ENCODE measurements at regions of chr12 and their contacts with region 1.

Region 1: DNA sequence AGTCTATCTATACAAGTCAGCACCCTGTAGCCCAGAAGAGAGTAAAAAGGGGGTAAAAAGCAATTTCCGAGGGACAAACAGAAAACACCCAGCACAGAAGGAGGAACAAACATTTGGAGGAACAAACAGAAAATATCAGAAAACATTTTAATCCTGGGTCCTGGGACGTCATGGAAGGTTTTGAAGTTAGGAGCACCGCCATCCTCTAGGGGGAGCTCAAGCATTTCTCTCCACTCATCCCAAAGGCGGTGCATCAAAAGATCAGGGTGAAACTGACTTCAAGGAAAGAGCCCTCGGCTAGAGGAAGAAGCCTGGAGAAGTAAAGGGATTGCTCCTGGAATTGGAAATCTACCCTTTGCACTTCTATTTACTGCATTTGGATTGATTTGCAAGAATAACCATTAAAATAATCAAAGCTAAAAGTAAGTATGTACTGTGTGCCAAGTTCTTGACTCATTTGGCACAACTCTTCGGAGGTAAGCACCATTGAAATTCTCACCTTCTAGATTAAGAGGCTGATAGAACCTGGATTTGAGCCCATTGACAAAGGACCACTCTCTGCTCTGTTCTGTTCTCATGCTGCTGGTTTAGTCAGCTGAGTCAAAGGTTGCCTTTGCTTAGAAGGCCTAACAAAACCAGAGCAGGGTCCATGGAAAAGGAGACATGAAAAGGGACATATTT is 17.2 kb upstream of the POC1B start:
- DNase-seq: peak; percentile 84
- H3K4me3 Mint-ChIP-seq: no peak overlapping the region
- H3K27ac Mint-ChIP-seq: peak overlapping the region; percentile 14
- H3K4me1 Mint-ChIP-seq: peaks cover 26% of the 10 kb centered on the region
- H3K27me3 Mint-ChIP-seq: no peaks in the 10 kb centered on the region
- CTCF ChIP-seq: peak; percentile 94

Region 2: DNA sequence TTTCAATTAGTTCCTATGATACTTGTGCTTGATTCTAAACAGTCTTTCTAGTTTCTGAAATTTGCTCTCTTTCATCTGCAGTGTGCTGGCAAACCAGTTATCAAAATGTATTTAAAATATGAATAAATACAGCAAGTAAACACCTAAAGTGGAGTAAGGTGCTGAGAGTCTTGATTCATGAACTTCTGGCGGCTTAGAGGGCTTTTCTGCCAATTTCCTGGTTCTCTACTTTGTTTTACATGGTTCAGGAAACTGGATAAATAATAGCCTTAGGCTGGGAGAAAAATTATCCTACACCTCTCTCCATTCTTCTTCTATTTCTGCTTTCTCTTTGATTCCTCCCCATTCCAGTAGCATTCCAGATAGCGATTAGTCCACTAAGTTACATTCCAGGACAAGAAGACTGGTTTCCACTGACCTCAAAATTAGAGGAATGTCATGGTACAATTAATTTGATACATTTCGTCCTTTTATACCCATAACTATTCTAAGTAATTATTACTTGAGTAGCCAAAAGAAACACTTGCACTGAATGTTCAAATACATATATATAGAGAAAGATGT is 150.7 kb after region 1 on chr12:
- CTCF ChIA-PET with region 1: no interaction called
- intact Hi-C with region 1: loop called (anchors 5 kb)
- DNase-seq: no peak
- H3K4me3 Mint-ChIP-seq: no peak overlapping the region
- H3K27ac Mint-ChIP-seq: no peak overlapping the region
- H3K4me1 Mint-ChIP-seq: peaks cover 40% of the 10 kb centered on the region
- H3K27me3 Mint-ChIP-seq: no peaks in the 10 kb centered on the region
- CTCF ChIP-seq: no peak

Region 3: GRCh38 chr12:89701606-89702206 is 158.7 kb after region 1 on chr12:
- CTCF ChIA-PET with region 1: no interaction called
- intact Hi-C with region 1: loop called (anchors 5 kb)
- DNase-seq: no peak
- H3K4me3 Mint-ChIP-seq: no peak overlapping the region
- H3K27ac Mint-ChIP-seq: no peak overlapping the region
- H3K4me1 Mint-ChIP-seq: peaks cover 74% of the 10 kb centered on the region
- H3K27me3 Mint-ChIP-seq: no peaks in the 10 kb centered on the region
- CTCF ChIP-seq: no peak

Region 4: GRCh38 chr12:89960011-89960507 is 417.0 kb after region 1 on chr12:
- CTCF ChIA-PET with region 1: no interaction called
- intact Hi-C with region 1: loop called (anchors 5 kb)
- DNase-seq: peak; percentile 67
- H3K4me3 Mint-ChIP-seq: no peak overlapping the region
- H3K27ac Mint-ChIP-seq: peak overlapping the region; percentile 49
- H3K4me1 Mint-ChIP-seq: peaks cover 43% of the 10 kb centered on the region
- H3K27me3 Mint-ChIP-seq: no peaks in the 10 kb centered on the region
- CTCF ChIP-seq: no peak

Region 5: GRCh38 chr12:90013409-90013808 is 470.4 kb after region 1 on chr12:
- CTCF ChIA-PET with region 1: no interaction called
- intact Hi-C with region 1: loop called (anchors 5 kb)
- DNase-seq: no peak
- H3K4me3 Mint-ChIP-seq: no peak overlapping the region
- H3K27ac Mint-ChIP-seq: no peak overlapping the region
- H3K4me1 Mint-ChIP-seq: no peaks in the 10 kb centered on the region
- H3K27me3 Mint-ChIP-seq: no peaks in the 10 kb centered on the region
- CTCF ChIP-seq: no peak

Region 6: DNA sequence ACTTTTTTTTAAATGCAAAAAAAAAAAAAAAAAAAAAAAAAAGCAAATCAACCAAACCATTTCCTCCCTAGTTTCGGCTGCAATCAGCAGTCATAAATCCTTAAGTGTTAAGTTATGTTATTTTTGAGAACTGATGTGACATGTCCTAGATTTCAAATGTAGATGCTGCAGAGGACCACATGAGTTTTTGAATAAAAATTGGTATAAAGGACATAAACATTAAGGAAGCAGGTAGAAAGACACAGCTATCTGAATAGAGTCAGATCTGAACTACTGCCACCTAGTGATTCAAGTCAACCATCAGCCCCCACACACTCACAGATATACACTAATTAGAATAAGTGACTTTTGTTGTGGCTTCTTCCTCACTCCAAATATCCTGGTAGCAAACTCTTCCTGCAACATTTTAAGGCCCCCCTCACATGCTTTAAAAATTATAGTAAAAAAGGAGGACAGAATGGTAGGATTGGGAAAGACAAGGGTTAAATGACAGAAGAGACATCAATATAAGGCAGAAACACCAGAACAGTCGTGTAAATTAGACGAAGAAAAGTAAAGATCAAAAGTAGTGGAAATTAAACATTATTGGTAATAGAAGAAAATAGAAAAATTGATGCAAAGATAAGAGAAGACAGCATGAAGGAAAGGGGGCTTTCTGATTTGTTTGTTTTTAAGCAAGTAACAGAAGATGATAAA is 560.1 kb after region 1 on chr12:
- CTCF ChIA-PET with region 1: no interaction called
- intact Hi-C with region 1: loop called (anchors 1 kb)
- DNase-seq: peak; percentile 12
- H3K4me3 Mint-ChIP-seq: no peak overlapping the region
- H3K27ac Mint-ChIP-seq: no peak overlapping the region
- H3K4me1 Mint-ChIP-seq: peaks cover 40% of the 10 kb centered on the region
- H3K27me3 Mint-ChIP-seq: no peaks in the 10 kb centered on the region
- CTCF ChIP-seq: peak; percentile 41

Region 7: GRCh38 chr12:90854136-90854689 is 1311.2 kb after region 1 on chr12:
- CTCF ChIA-PET with region 1: no interaction called
- intact Hi-C with region 1: loop called (anchors 10 kb)
- DNase-seq: peak; percentile 39
- H3K4me3 Mint-ChIP-seq: no peak overlapping the region
- H3K27ac Mint-ChIP-seq: no peak overlapping the region
- H3K4me1 Mint-ChIP-seq: peaks cover 24% of the 10 kb centered on the region
- H3K27me3 Mint-ChIP-seq: no peaks in the 10 kb centered on the region
- CTCF ChIP-seq: peak; percentile 75

Measured in Calu3 (cell line).